ENCODE measurements at regions of chr7 and their contacts with region 1.

Region 1: GRCh38 chr7:44565097-44565794 is 8.5 kb downstream of the DDX56 start:
- DNase-seq: peak; percentile 62
- H3K4me3 ChIP-seq: no peak overlapping the region
- H3K27ac ChIP-seq: no peak overlapping the region
- H3K4me1 ChIP-seq: no peaks in the 10 kb centered on the region
- H3K27me3 ChIP-seq: no peaks in the 10 kb centered on the region
- CTCF ChIP-seq: peak; percentile 94 to 98
- POLR2A ChIP-seq: no peak

Region 2: GRCh38 chr7:44213877-44214388 is 351.3 kb before region 1 on chr7:
- CTCF ChIA-PET with region 1: interaction called, 18 read pairs
- POLR2A ChIA-PET with region 1: no interaction called
- dilution Hi-C with region 1: no loop called
- intact Hi-C with region 1: loop called (anchors 1 kb)
- DNase-seq: no peak
- H3K4me3 ChIP-seq: no peak overlapping the region
- H3K27ac ChIP-seq: no peak overlapping the region
- H3K4me1 ChIP-seq: no peaks in the 10 kb centered on the region
- H3K27me3 ChIP-seq: no peaks in the 10 kb centered on the region
- CTCF ChIP-seq: no peak
- POLR2A ChIP-seq: no peak

Region 3: DNA sequence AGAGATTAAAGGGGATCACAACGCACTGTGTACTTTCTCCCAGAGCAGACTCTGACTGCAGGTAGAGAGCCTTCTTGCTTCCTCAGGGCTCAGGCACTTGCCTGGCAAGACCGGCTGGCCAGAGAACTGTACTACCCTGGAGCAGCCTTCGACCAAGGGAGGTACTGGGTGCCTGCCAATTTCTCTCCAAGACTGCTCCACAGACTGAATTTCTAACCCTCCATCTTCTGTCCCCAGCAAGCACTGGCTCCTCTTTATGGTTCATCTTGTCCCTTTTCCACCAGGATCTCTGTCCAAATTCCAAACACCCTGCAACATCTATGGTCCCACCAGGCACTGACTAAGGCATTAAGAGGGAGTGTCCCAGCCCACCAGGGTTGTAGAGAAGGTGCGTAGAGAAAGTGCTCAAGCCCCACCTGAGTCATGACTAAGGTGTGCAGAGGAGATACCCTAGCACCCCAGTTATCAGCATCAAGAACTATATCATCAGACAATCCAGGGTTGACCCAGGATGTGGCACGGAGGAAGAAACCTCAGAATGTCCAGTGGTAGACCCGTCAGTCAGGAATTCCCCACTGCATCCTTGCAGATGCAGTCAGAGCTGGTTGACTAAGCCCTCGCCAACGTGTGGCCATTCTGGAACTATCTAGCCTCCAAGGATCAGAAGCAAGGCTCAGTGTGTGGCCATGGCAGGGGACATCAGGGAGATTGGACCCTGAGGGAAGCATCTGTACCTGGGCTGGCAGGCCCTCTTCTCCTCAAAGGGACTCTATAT is 178.9 kb before region 1 on chr7:
- CTCF ChIA-PET with region 1: no interaction called
- POLR2A ChIA-PET with region 1: no interaction called
- dilution Hi-C with region 1: no loop called
- intact Hi-C with region 1: no loop called
- DNase-seq: no peak
- H3K4me3 ChIP-seq: no peak overlapping the region
- H3K27ac ChIP-seq: no peak overlapping the region
- H3K4me1 ChIP-seq: peaks cover 45% of the 10 kb centered on the region
- H3K27me3 ChIP-seq: no peaks in the 10 kb centered on the region
- CTCF ChIP-seq: no peak
- POLR2A ChIP-seq: no peak

Region 4: DNA sequence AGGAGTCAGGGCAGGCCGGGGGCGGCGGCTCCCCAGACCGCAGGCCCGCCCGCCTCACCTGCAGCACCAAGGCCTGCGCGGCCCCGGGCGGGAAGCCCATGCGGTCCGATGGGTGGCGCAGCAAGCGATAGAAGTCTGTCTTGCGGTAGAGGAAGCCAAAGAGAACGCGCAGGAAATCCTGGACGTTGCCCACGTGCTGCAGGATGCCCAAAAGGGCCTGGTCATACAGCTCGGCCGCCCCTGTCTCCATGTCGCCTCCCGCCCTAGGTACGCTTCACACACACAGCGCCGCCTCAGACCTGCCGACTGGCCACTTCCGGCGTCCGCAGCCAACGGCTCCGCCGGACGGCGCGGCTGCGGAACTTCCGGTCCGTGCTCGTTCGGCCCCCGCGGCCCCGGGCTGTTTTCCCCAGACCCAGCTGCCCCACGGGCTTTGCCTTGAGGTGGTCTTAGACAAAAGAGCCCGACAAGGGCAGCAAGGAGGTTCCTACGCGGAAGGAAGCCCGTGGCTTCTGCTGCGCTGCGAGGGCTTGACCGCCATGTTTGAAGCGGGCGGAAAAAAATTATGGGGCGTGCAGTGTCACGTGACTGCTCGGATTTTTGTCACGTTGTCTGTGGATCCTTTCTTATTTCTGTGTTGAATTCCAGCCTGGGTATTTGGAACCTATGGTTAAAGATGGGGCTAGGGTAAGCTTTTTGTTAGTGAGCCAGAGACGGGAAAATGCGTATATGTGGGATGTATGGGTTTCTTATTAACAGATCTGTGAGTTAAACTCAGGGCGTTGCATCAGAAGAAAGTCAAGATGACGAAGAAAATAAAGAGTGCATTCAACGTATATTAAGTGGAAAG is 74.7 kb before region 1 on chr7 and contains the start of gene NUDCD3:
- CTCF ChIA-PET with region 1: interaction called, 16 read pairs
- POLR2A ChIA-PET with region 1: no interaction called
- dilution Hi-C with region 1: no loop called
- intact Hi-C with region 1: loop called (anchors 5 kb)
- DNase-seq: peak; percentile 87
- H3K4me3 ChIP-seq: peak within 1 kb of the TSS; percentile 65 to 94 (median 65)
- H3K27ac ChIP-seq: peak within 1 kb of the TSS; percentile 91
- H3K4me1 ChIP-seq: peaks cover 38% of the 10 kb centered on the region
- H3K27me3 ChIP-seq: peaks cover 0 to 4% of the 10 kb centered on the region in 2 experiments
- CTCF ChIP-seq: peak; percentile 6 to 26
- POLR2A ChIP-seq: peak; percentile 75
- total RNA-seq, gene NUDCD3: 117 and 137 TPM in 2 replicates

Region 5: DNA sequence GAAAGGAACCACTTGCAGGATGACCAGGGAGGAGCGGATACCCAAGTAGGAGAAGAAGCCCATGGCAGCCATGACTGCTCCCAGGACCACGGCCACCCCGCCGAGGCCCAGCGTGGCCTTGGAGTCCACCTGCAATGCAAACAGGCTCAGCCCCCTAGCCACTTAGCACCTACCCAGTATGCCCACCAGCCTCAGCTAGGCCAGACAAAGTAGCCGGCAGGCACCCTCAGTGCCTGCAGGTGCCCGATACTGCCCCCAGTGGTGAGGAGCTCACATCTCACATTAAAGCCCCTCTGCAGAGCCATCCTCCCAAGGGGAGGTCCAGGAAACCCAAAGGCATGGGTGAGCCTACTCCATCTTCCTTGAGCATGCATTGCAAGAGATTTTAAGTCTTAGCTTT is 30.7 kb before region 1 on chr7:
- CTCF ChIA-PET with region 1: interaction called, 12 read pairs
- POLR2A ChIA-PET with region 1: no interaction called
- dilution Hi-C with region 1: no loop called
- intact Hi-C with region 1: no loop called
- DNase-seq: peak; percentile 21
- H3K4me3 ChIP-seq: no peak overlapping the region
- H3K27ac ChIP-seq: no peak overlapping the region
- H3K4me1 ChIP-seq: no peaks in the 10 kb centered on the region
- H3K27me3 ChIP-seq: no peaks in the 10 kb centered on the region
- CTCF ChIP-seq: peak; percentile 75 to 81
- POLR2A ChIP-seq: no peak

Region 6: DNA sequence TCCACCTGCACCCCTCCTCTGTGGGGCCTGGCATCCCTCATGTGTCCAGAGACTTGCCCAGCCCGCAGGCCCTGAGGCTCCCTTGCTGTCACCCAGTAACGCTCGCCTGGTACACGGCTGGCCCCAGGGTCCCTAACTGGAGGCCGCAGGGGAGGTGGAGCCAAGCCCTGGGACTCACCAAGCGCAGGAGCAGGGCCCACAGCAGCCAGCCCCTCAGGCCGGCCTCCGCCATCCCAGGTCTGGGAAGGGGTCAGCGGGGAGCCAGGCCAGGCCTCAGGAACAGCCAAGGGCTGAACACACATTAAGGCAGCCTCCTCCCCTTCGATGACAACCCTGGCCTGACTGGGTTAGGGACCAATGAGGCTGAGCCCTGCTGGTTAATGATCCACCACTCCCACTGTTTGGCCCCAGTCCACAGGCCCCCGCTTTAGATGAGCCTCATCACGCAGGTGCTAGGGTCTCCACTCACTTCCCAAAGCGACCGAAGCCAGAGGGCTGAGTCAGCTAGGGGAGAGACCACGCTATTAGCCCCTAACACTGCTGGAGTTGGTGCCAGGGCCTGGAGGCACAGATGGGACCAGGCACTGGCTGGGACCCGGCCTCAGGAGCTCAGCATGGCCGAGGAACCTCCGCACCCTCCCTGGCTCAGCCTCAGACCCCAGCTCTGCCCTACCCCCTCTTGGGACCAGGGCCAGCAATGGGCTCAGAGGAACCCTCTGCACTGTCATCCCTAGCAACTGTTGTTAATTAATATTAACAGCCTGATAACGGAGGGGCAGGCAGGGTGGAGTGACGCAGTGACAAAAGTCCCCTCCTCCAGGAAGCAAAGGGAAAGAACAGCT is 24.0 kb before region 1 on chr7 and contains the start of gene NPC1L1:
- CTCF ChIA-PET with region 1: interaction called, 10 read pairs
- POLR2A ChIA-PET with region 1: no interaction called
- dilution Hi-C with region 1: no loop called
- intact Hi-C with region 1: no loop called
- DNase-seq: no peak
- H3K4me3 ChIP-seq: no peak within 1 kb of the TSS
- H3K27ac ChIP-seq: no peak within 1 kb of the TSS
- H3K4me1 ChIP-seq: no peaks in the 10 kb centered on the region
- H3K27me3 ChIP-seq: no peaks in the 10 kb centered on the region
- CTCF ChIP-seq: no peak
- POLR2A ChIP-seq: no peak
- total RNA-seq, gene NPC1L1: not detected in 2 replicates

Region 7: GRCh38 chr7:44633254-44634186 is 68.3 kb after region 1 on chr7:
- CTCF ChIA-PET with region 1: no interaction called
- POLR2A ChIA-PET with region 1: no interaction called
- dilution Hi-C with region 1: no loop called
- intact Hi-C with region 1: no loop called
- DNase-seq: peak; percentile 95
- H3K4me3 ChIP-seq: no peak overlapping the region
- H3K27ac ChIP-seq: peak overlapping the region; percentile 97
- H3K4me1 ChIP-seq: peaks cover 38% of the 10 kb centered on the region
- H3K27me3 ChIP-seq: no peaks in the 10 kb centered on the region
- CTCF ChIP-seq: no peak
- POLR2A ChIP-seq: no peak

Measured in endothelial cell of umbilical vein (primary cell).